Activated naive CD4-positive, alpha-beta T cell treated with anti-CD3 and anti-CD28 coated beads for 36 hours (primary cell): ENCODE measurements at regions of chr6 and their contacts with region 1.

Region 1: DNA sequence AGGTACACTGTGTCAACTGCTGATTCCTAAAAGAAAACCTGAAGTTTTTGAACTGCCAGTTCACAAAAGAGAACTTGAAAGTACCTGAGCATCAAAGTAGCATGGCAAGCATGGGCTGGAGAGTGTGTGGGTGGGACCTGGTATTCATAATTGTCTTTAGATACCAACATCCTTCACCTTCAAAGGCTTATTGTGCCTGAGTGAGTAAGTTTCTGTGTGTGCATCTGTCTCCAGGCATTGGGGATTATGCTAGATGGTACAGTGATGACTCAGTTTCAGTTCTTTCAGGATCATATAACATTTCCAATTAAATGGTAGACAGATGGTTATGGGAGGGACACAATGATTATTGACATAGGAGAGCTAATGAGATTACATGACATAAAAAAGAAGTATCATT is 238.5 kb downstream of the ZFAND3 start:
- DNase-seq: peak; percentile 88
- H3K4me3 Mint-ChIP-seq: no peak overlapping the region
- H3K27ac Mint-ChIP-seq: peak overlapping the region; percentile 13
- H3K4me1 Mint-ChIP-seq: peaks cover 23% of the 10 kb centered on the region
- H3K27me3 Mint-ChIP-seq: no peaks in the 10 kb centered on the region

Region 2: DNA sequence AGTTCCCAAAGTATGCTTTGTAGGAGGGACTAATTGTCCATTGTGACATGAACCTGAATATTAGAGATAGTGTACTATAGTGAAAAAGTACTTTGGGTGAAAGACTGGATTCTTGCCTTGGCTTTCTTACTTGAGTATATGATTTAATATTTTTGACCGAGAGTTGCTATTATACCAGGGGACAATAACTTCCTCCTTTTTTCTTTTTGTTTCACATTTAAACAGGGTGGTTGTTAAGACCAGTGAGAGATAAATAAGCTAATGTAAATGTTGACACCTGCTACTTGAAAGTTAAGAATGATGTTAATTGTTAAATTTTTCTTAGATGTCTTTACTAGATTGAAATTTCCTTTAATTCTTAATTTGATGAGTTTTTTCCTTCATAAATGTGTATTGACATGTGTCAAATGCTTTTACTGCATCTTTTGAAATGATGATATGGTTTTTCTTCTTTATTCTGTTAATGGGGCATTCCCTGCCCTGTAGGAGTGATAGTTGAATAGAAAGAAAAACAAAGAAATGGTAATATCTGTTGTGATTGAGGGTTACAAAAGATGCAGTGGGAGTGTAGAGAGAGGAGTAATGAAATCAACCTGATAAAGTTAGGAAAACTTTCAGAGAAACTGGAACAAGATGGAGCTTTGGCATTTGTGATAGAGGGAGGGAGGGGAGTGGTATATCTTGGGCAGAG is 190.1 kb before region 1 on chr6:
- CTCF ChIA-PET with region 1: no interaction called
- intact Hi-C with region 1: loop called (anchors 2 kb)
- DNase-seq: no peak
- H3K4me3 Mint-ChIP-seq: no peak overlapping the region
- H3K27ac Mint-ChIP-seq: peak overlapping the region; percentile 65
- H3K4me1 Mint-ChIP-seq: peaks cover 79% of the 10 kb centered on the region
- H3K27me3 Mint-ChIP-seq: no peaks in the 10 kb centered on the region

Region 3: GRCh38 chr6:37985302-37985701 is 72.7 kb before region 1 on chr6:
- CTCF ChIA-PET with region 1: no interaction called
- intact Hi-C with region 1: loop called (anchors 1 kb)
- DNase-seq: no peak
- H3K4me3 Mint-ChIP-seq: no peak overlapping the region
- H3K27ac Mint-ChIP-seq: no peak overlapping the region
- H3K4me1 Mint-ChIP-seq: peaks cover 69% of the 10 kb centered on the region
- H3K27me3 Mint-ChIP-seq: no peaks in the 10 kb centered on the region

Region 4: DNA sequence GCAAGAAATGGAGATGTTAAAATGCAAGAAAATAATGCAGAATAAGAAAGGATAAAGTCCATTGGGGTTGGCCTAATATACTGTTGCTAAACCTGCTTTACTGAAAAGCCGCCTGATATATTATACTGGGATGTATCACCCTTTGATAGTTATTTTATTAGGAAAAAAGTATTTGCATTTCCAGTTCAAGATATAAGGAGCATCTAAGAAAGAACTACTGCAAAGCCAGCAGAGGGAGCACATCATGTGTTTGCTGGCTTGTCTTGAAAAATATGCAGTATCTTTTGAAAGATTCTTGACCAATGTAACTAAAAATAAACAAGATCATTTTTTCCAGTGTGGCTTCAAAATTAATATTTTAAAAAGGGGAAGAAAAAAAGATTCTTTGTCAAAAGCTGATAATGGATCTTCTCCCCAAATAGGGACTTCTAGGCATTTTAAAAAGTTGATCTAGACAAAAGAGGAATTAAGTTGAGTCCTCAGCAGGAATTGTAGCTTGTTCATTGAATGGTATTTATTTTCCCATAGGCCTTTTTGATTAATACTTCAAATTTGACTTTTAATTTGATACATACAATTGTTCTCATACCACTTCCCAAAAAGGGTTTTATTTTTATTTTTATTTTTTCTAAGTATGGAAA is 23.6 kb before region 1 on chr6:
- CTCF ChIA-PET with region 1: interaction called, 4 read pairs
- intact Hi-C with region 1: loop called (anchors 2 kb)
- DNase-seq: peak; percentile 7
- H3K4me3 Mint-ChIP-seq: no peak overlapping the region
- H3K27ac Mint-ChIP-seq: no peak overlapping the region
- H3K4me1 Mint-ChIP-seq: peaks cover 51% of the 10 kb centered on the region
- H3K27me3 Mint-ChIP-seq: no peaks in the 10 kb centered on the region

Region 5: GRCh38 chr6:38095054-38095453 is 37.1 kb after region 1 on chr6:
- CTCF ChIA-PET with region 1: no interaction called
- intact Hi-C with region 1: no loop called
- DNase-seq: no peak
- H3K4me3 Mint-ChIP-seq: no peak overlapping the region
- H3K27ac Mint-ChIP-seq: no peak overlapping the region
- H3K4me1 Mint-ChIP-seq: peaks cover 16% of the 10 kb centered on the region
- H3K27me3 Mint-ChIP-seq: no peaks in the 10 kb centered on the region

Region 6: DNA sequence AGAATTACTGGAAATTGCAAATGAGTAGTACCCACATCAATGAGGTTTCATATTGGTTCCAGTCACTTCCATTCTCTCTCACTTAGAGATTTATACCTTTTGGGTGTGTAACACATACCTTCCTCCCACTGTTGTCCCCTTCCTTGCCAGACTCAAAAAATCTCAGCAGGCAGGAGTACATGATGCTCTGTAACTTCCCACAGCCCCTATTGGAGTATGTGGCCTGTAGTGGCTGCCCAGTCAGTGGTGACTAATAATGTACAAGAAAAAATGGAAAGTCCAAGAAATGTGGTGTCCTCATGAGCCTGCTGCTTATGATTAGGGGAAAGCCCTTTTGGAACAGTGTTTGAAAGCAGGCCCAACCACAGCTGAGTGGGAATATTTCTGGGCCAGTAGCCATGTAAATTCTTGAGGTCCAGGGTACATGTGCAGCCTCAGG is 73.6 kb after region 1 on chr6:
- CTCF ChIA-PET with region 1: no interaction called
- intact Hi-C with region 1: loop called (anchors 1 kb)
- DNase-seq: peak; percentile 33
- H3K4me3 Mint-ChIP-seq: no peak overlapping the region
- H3K27ac Mint-ChIP-seq: peak overlapping the region; percentile 55
- H3K4me1 Mint-ChIP-seq: peaks cover 44% of the 10 kb centered on the region
- H3K27me3 Mint-ChIP-seq: no peaks in the 10 kb centered on the region